ENCODE measurements at regions of chr17 and their contacts with region 1.

Region 1: GRCh38 chr17:68435876-68436842 is 21.1 kb downstream of the WIPI1 start:
- DNase-seq: peak; percentile 80
- H3K4me3 ChIP-seq: no peak overlapping the region
- H3K27ac ChIP-seq: peak overlapping the region in 1 of 2 experiments; percentile 39; a peak in 1 of 4 replicates
- H3K4me1 ChIP-seq: peaks cover 0 to 10% of the 10 kb centered on the region in 2 experiments; a peak in 2 of 4 replicates
- H3K27me3 ChIP-seq: no peaks in the 10 kb centered on the region
- CTCF ChIP-seq: peak; percentile 100
- EP300 ChIP-seq: 0 out of 4 replicates have a peak, but pooled peaks of 1 of the 2 experiments have one; percentile 21
- RAD21 ChIP-seq: peak; percentile 89

Region 2: GRCh38 chr17:68247445-68248198 is 188.5 kb before region 1 on chr17 and contains the start of gene AMZ2:
- CTCF ChIA-PET with region 1: interaction called, 19 read pairs
- POLR2A ChIA-PET with region 1: no interaction called
- DNase-seq: peak; percentile 99
- H3K4me3 ChIP-seq: peak within 1 kb of the TSS; percentile 76 to 79
- H3K27ac ChIP-seq: peak within 1 kb of the TSS; percentile 79 to 89
- H3K4me1 ChIP-seq: peaks cover 6 to 8% of the 10 kb centered on the region in 2 experiments; a peak in 2 of 4 replicates
- H3K27me3 ChIP-seq: no peaks in the 10 kb centered on the region
- CTCF ChIP-seq: no peak
- EP300 ChIP-seq: no peak
- RAD21 ChIP-seq: no peak
- polyA plus RNA-seq, gene AMZ2: 95.9 and 115 TPM in 2 replicates

Region 3: DNA sequence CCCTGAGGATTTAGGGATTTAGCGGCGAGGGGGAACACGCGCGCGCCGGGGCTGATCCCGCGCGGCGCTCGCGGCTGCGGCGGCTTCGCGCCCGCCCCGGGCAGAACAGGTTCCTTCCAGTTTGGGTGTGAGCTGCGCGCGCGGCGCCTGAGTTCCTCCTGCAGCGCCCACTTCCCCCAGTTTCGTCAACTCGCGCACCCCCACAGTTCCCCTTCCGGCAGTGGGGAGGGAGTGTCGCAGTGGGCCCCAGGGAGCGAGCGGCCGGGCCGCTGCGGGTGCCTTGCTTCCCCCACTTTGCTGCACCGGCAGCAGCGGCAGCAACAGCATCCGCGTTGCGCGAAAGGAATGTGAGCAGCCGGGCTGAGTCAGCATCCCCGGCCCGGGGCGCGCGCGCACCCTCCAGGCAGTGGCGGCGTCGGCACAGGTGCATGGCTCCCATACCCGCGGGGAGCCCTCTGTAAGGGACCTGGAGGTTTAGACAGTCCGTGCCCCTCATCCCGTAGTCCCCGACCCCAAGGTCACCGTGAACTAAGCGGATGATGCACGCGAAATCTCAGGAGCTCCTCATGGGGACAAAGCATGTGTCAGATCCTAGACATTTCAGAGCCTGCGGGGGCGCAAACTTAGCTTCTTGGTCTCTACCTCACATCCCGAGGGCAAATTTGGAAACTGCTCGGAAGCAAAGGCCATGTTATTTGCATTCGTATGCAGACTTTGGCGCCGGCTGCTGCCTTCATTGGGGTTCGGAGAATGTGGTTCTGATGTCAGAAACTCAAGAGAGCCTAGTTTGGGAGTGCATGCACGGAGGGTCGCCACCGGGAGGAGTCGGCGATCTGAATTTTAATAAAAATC is 144.1 kb before region 1 on chr17:
- CTCF ChIA-PET with region 1: interaction called, 15 read pairs
- POLR2A ChIA-PET with region 1: no interaction called
- DNase-seq: peak; percentile 86
- H3K4me3 ChIP-seq: peak overlapping the region; percentile 55 to 72
- H3K27ac ChIP-seq: no peak overlapping the region
- H3K4me1 ChIP-seq: peaks cover 0 to 13% of the 10 kb centered on the region in 2 experiments; a peak in 2 of 4 replicates
- H3K27me3 ChIP-seq: peaks cover 66% of the 10 kb centered on the region
- CTCF ChIP-seq: no peak
- EP300 ChIP-seq: no peak; a peak in 1 of 4 replicates
- RAD21 ChIP-seq: no peak

Region 4: DNA sequence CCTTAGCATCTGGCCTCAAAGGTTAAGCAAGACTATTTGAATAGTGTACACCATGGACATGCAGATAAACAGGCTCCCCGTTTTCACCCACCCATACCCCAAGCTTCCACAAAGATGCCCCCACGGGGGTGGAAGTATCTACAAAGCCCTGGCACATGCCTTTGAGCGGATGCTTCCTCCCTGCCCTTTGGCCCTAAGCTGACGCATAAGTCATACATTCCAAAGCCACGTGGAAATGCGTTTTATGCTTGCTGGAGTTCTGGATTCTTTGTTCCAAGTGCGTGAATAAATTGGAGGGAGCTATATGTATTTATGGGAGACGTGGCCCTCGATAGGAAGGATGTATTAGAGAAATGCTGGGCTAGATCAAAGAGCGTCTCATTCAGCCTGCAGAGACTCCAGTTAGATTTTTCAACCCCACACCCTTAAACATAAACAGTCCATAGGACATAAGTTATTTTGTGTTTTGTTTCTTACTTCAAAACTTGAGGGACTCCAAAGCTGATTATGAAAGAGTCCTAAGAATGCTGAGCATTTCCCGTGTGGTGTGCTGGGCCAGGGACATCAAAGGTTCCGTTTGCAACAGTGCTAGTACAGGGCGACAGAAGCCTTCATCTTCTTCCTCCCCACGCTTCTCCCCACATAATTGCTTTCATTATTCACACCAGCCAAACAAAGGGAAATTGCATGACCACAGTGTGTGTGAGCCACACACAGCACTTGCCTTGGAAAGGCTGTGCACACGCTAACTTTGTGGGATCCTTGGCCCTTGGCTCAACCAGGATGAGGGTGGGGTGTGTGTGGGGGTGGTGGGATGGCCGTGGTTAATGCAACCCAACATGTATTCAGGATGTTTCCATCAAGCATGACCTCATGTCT is 52.5 kb before region 1 on chr17:
- CTCF ChIA-PET with region 1: interaction called, 11 read pairs
- POLR2A ChIA-PET with region 1: no interaction called
- DNase-seq: no peak
- H3K4me3 ChIP-seq: no peak overlapping the region
- H3K27ac ChIP-seq: no peak overlapping the region
- H3K4me1 ChIP-seq: no peaks in the 10 kb centered on the region
- H3K27me3 ChIP-seq: no peaks in the 10 kb centered on the region; the same call in 1 of the 2 replicates
- CTCF ChIP-seq: no peak
- EP300 ChIP-seq: no peak
- RAD21 ChIP-seq: no peak

Region 5: GRCh38 chr17:68418876-68419275 is 17.3 kb before region 1 on chr17:
- CTCF ChIA-PET with region 1: interaction called, 35 read pairs
- POLR2A ChIA-PET with region 1: no interaction called
- DNase-seq: no peak
- H3K4me3 ChIP-seq: no peak overlapping the region
- H3K27ac ChIP-seq: no peak overlapping the region
- H3K4me1 ChIP-seq: no peaks in the 10 kb centered on the region
- H3K27me3 ChIP-seq: no peaks in the 10 kb centered on the region
- CTCF ChIP-seq: no peak
- EP300 ChIP-seq: no peak
- RAD21 ChIP-seq: no peak

Region 6: GRCh38 chr17:68446626-68447041 is 10.5 kb after region 1 on chr17:
- CTCF ChIA-PET with region 1: interaction called, 80 read pairs
- POLR2A ChIA-PET with region 1: no interaction called
- DNase-seq: no peak
- H3K4me3 ChIP-seq: no peak overlapping the region
- H3K27ac ChIP-seq: no peak overlapping the region
- H3K4me1 ChIP-seq: no peaks in the 10 kb centered on the region
- H3K27me3 ChIP-seq: no peaks in the 10 kb centered on the region
- CTCF ChIP-seq: no peak
- EP300 ChIP-seq: no peak
- RAD21 ChIP-seq: no peak

Region 7: DNA sequence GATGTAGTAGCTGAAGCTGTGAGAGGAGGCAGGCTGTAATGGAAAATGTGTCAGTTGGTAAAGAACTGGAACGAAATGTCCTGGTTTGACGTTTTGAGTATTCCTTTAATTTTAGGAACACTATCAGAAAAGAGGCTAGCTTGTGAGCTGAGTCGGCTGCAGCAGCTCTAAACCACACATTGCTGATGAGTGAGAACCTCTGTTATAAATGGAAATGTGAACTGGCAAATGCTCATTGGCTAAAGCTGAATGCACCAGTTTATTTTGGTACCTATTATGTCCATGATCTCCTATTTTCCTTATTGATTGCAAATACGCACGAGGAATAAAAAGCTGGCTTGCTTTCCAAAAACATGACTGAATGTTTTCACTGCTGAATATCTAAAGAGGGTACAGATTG is 32.2 kb after region 1 on chr17:
- CTCF ChIA-PET with region 1: interaction called, 23 read pairs
- POLR2A ChIA-PET with region 1: no interaction called
- DNase-seq: no peak
- H3K4me3 ChIP-seq: no peak overlapping the region
- H3K27ac ChIP-seq: no peak overlapping the region
- H3K4me1 ChIP-seq: no peaks in the 10 kb centered on the region
- H3K27me3 ChIP-seq: no peaks in the 10 kb centered on the region; the same call in 1 of the 2 replicates
- CTCF ChIP-seq: no peak
- EP300 ChIP-seq: no peak
- RAD21 ChIP-seq: no peak

Measured in SK-N-SH (cell line).